ENCODE measurements at regions of chr9 and their contacts with region 1.

Region 1: DNA sequence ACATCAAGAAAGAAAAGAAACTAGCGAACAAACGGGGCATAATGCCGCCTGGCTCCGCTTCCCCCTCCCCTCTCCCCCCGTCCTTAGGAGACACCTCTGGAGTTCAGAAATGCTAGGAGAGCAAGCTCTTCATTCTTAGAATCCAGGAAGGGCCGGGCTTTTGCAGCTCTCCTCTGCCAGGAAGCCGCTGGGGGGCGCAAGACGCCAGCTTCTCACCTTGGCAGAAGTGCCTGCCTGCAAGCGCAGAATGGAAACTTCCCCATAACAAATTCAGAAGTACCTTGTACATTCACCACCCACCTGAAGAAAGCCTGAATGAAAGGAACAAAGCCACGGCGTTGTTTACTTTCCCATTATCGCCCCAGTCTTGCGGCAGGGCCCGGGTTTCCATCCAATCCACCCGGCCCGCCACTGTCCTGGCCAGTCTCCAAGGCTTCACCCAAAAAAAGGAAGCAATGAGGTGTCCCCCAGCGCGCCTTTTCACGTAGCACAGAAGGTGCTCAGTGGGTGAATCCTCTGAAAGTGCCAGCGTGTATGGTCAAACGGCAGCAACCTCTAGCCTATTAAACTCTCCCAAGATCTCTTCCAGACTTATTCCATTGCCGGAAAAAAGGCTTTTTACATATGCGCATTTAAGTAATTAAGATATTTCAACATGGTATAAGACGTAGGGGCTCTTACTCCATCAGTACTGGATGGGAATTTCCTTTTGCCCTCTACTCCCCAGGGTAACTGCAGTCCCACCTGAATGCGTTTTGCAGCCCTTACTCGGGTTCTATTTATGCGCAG is 1.6 kb upstream of the GADD45G start:
- DNase-seq: peak; percentile 90
- ATAC-seq: peak; percentile 44
- H3K4me3 ChIP-seq: peak overlapping the region; percentile 50 to 72 (median 58)
- H3K4me3 Mint-ChIP-seq: peak overlapping the region; percentile 83
- H3K27ac ChIP-seq: no peak overlapping the region
- H3K27ac Mint-ChIP-seq: peak overlapping the region; percentile 44
- H3K4me1 ChIP-seq: peaks cover 21 to 39% of the 10 kb centered on the region in 2 donors
- H3K4me1 Mint-ChIP-seq: peaks cover 32% of the 10 kb centered on the region
- H3K27me3 ChIP-seq: peaks cover 0 to 39% (median 16%) of the 10 kb centered on the region in 4 experiments
- H3K27me3 Mint-ChIP-seq: peaks cover 13% of the 10 kb centered on the region
- CTCF ChIP-seq: peak; percentile 79

Region 2: DNA sequence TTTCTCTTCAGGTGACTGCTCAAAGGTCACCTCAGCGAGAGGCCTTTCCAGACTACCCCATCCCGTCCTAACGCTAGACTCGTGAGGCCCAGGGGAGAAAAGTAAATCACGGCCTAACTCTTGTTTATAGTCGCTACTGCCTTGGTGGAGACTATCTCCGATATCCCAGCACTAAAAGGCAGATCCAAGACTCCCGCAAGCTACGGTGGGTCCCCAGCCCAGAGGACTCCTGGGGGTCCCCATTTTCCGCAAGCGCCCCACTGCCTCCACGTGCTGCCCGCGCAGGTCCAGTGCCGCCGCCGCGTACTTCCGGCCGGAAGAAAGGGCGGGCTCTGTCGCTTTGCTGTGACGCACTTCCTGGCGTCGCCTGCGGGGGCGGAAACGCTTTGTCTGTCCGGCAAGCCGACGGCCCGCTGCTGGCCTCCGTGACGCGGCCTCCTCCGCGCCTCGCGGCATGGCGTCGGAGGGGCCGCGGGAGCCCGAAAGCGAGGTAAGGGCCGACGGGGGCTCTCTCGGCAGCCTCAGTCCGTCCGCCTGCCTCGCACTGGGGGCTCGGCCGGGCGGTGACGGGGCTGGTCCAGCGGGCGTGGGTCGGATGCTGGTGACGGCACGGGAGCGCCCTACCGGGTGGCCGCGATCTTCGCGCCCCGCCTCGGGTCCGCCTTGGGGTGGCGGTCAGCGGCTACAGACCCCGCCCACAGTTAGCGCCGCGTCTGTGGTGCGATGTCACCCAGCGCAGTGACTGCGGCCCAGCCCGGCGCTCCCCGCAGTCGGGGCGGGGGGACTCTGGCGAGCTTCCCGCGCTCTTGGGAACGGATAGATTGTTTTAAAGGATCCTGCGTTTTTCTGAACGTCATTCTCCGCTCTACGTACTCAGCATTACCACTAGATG is 284.8 kb before region 1 on chr9 and contains the start of gene SECISBP2:
- CTCF ChIA-PET with region 1: no interaction called
- POLR2A ChIA-PET with region 1: no interaction called
- intact Hi-C with region 1: loop called (anchors 2 kb)
- DNase-seq: peak; percentile 97
- ATAC-seq: peak; percentile 91
- H3K4me3 ChIP-seq: peak within 1 kb of the TSS; percentile 56 to 93 (median 81)
- H3K4me3 Mint-ChIP-seq: peak within 1 kb of the TSS; percentile 89
- H3K27ac ChIP-seq: peak within 1 kb of the TSS; percentile 96 to 99
- H3K27ac Mint-ChIP-seq: peak within 1 kb of the TSS; percentile 93
- H3K4me1 ChIP-seq: peaks cover 20 to 21% of the 10 kb centered on the region in 2 donors
- H3K4me1 Mint-ChIP-seq: peaks cover 65% of the 10 kb centered on the region
- H3K27me3 ChIP-seq: no peaks in the 10 kb centered on the region
- H3K27me3 Mint-ChIP-seq: no peaks in the 10 kb centered on the region
- CTCF ChIP-seq: peak; percentile 82
- total RNA-seq, gene SECISBP2: 124 and 130 TPM in 2 replicates

Region 3: DNA sequence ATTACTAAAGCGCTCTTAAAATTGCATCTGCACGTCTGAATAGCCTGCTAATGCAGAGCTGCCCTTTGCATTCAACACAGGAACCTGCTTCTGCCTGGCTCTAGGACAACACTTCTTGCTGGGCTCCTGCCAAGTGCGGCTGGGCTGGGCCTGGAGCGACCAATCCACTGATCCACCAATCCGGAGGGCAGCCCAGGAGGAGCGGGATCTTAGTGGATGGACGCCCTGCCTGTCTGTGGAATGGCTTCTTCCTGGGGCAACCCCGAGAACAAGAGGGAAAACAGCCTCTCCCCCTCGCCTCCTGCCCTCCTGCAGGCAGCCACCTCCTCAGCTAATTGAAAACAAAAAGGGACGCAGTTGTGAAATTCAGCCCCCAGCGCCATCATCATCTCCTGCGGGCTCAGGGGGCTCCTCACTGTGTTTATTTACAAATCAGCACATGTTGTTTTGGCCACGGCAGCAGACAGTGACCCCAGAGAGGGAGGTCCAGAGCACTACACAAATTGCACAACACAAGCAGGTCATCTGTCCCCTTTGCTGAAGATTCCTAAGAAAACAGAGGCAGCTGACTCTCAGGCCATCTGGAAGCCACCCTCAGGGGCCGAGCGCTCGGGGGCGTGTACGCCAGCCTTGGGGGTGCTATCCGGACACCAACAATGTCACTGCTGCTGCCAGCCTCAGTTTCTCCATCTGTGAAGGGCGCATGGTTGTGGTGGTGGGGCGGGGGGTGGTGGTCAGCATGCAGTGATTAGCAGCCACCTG is 59.0 kb after region 1 on chr9:
- CTCF ChIA-PET with region 1: no interaction called
- POLR2A ChIA-PET with region 1: no interaction called
- intact Hi-C with region 1: no loop called
- DNase-seq: no peak
- ATAC-seq: no peak
- H3K4me3 ChIP-seq: no peak overlapping the region
- H3K4me3 Mint-ChIP-seq: no peak overlapping the region
- H3K27ac ChIP-seq: no peak overlapping the region
- H3K27ac Mint-ChIP-seq: no peak overlapping the region
- H3K4me1 ChIP-seq: peaks cover 0 to 4% of the 10 kb centered on the region in 2 donors
- H3K4me1 Mint-ChIP-seq: peaks cover 3% of the 10 kb centered on the region
- H3K27me3 ChIP-seq: peaks cover 0 to 12% (median 6%) of the 10 kb centered on the region in 4 experiments
- H3K27me3 Mint-ChIP-seq: peaks cover 13% of the 10 kb centered on the region
- CTCF ChIP-seq: no peak

Region 4: DNA sequence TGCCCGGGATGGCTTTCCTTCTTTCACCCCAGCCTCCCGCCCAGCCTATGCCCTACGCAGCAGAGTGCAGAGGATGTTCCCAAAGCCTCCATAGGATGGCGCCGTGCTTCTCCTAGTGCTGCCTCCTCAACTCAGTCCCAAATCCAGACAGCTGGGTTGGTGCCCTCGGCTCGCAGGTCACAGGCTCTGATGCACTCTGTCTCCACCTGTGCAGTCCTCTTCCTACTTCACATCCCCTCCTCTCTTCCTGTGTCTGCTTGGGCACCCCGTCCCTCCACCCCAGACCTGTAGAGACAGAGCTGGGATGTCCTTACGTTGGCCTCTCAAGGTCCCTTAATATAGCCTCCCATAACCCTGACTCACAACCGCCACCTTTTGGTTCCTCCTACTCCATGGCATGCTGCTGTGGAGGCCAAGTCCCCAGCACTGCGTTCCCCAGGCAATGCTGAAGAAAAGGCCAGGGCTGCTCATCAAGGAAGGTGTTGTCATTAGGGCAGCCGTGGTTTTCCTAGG is 316.1 kb after region 1 on chr9:
- CTCF ChIA-PET with region 1: interaction called, 72 read pairs
- POLR2A ChIA-PET with region 1: no interaction called
- intact Hi-C with region 1: loop called (anchors 1 kb)
- DNase-seq: peak; percentile 56
- ATAC-seq: peak; percentile 53
- H3K4me3 ChIP-seq: no peak overlapping the region
- H3K4me3 Mint-ChIP-seq: no peak overlapping the region
- H3K27ac ChIP-seq: no peak overlapping the region
- H3K27ac Mint-ChIP-seq: no peak overlapping the region
- H3K4me1 ChIP-seq: peaks cover 0 to 5% of the 10 kb centered on the region in 2 donors
- H3K4me1 Mint-ChIP-seq: peaks cover 2% of the 10 kb centered on the region
- H3K27me3 ChIP-seq: no peaks in the 10 kb centered on the region
- H3K27me3 Mint-ChIP-seq: peaks cover 12% of the 10 kb centered on the region
- CTCF ChIP-seq: peak; percentile 29

Region 5: DNA sequence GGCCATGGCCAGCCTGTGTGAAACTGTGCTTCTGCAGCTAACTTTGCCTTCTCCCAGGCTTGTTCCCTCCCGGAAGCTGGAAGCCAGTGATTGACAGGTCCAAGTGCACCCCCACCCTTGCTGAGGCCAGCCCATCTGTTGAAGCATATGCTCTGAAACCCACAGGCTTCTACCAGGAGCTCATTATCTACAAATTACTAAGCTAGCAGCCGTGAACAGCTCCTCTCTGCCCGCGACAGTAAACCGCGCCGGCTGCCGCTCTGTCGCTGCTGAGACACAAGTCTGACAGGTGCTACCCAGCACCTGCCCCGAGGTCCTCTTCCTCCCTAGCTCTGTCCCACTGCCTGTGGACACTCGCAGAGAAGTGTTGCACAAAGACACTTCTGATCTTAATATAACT is 492.5 kb after region 1 on chr9:
- CTCF ChIA-PET with region 1: interaction called, 406 read pairs
- POLR2A ChIA-PET with region 1: no interaction called
- intact Hi-C with region 1: no loop called
- DNase-seq: no peak
- ATAC-seq: no peak
- H3K4me3 ChIP-seq: no peak overlapping the region
- H3K4me3 Mint-ChIP-seq: no peak overlapping the region
- H3K27ac ChIP-seq: no peak overlapping the region
- H3K27ac Mint-ChIP-seq: no peak overlapping the region
- H3K4me1 ChIP-seq: no peaks in the 10 kb centered on the region
- H3K4me1 Mint-ChIP-seq: no peaks in the 10 kb centered on the region
- H3K27me3 ChIP-seq: peaks cover 0 to 6% (median 3%) of the 10 kb centered on the region in 4 experiments
- H3K27me3 Mint-ChIP-seq: peaks cover 9% of the 10 kb centered on the region
- CTCF ChIP-seq: no peak

Region 6: DNA sequence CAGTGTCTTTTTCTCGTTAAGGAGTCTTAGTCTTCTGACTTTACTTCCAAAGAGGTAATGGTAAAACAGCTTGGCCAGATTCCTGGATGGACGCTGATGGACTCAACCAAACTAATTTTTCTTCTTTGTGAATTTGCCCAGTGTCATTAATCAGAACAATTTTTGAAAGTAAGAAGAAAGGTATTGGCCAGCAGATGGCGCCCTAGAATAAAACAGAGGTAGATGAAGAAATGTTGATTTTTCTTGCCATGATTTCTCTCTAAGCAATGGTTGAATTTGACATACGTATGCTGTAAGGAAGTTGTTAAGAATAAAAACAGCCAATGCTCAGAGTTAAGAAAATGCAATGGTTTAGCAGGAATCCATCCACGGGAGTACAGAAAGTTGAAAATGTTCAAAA is 539.4 kb after region 1 on chr9:
- CTCF ChIA-PET with region 1: interaction called, 23 read pairs
- POLR2A ChIA-PET with region 1: no interaction called
- intact Hi-C with region 1: no loop called
- DNase-seq: peak; percentile 80
- ATAC-seq: no peak
- H3K4me3 ChIP-seq: no peak overlapping the region
- H3K4me3 Mint-ChIP-seq: no peak overlapping the region
- H3K27ac ChIP-seq: no peak overlapping the region
- H3K27ac Mint-ChIP-seq: no peak overlapping the region
- H3K4me1 ChIP-seq: no peaks in the 10 kb centered on the region
- H3K4me1 Mint-ChIP-seq: peaks cover 4% of the 10 kb centered on the region
- H3K27me3 ChIP-seq: peaks cover 0 to 4% (median 0%) of the 10 kb centered on the region in 4 experiments
- H3K27me3 Mint-ChIP-seq: peaks cover 17% of the 10 kb centered on the region
- CTCF ChIP-seq: peak; percentile 76

Region 7: DNA sequence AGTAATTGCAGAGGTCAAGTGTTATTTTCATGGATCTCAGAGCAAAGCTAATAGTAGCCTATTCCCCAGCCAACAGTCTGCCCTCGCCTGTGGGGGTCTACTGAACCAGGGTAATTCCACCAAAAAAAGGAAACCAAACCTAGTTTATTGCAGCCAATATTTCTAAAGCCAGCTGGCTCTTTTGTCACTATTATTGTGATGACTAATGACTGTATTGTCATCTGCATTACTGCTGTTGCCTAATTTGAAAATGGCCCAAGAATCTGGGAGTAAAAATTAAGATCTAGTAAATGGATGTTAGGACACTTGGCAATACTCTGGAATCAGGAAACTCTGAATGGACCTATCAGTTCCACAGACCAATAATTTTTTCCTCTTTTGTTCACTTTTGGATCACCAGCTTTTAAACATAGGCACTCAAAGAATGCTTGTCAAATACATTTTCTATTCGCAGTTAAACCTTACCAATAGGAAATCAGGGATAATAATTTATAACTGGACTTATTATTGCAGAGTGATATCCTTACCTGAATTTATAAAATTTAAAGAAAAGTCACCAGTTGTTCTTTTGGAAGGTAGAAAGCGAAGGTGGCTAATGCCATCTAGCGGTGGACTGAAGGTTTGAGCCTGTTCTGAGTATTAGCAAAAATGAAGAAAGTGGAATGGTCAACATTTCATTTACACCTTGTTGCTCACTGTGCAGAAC is 1267.6 kb after region 1 on chr9:
- CTCF ChIA-PET with region 1: no interaction called
- POLR2A ChIA-PET with region 1: no interaction called
- intact Hi-C with region 1: loop called (anchors 5 kb)
- DNase-seq: peak; percentile 70
- ATAC-seq: peak; percentile 39
- H3K4me3 ChIP-seq: no peak overlapping the region
- H3K4me3 Mint-ChIP-seq: no peak overlapping the region
- H3K27ac ChIP-seq: peak overlapping the region in 1 of 2 donors; percentile 44
- H3K27ac Mint-ChIP-seq: no peak overlapping the region
- H3K4me1 ChIP-seq: no peaks in the 10 kb centered on the region
- H3K4me1 Mint-ChIP-seq: peaks cover 1% of the 10 kb centered on the region
- H3K27me3 ChIP-seq: no peaks in the 10 kb centered on the region
- H3K27me3 Mint-ChIP-seq: no peaks in the 10 kb centered on the region
- CTCF ChIP-seq: peak; percentile 99